AG04450 (cell line): ENCODE measurements at regions of chr4 and their contacts with region 1.

Region 1: DNA sequence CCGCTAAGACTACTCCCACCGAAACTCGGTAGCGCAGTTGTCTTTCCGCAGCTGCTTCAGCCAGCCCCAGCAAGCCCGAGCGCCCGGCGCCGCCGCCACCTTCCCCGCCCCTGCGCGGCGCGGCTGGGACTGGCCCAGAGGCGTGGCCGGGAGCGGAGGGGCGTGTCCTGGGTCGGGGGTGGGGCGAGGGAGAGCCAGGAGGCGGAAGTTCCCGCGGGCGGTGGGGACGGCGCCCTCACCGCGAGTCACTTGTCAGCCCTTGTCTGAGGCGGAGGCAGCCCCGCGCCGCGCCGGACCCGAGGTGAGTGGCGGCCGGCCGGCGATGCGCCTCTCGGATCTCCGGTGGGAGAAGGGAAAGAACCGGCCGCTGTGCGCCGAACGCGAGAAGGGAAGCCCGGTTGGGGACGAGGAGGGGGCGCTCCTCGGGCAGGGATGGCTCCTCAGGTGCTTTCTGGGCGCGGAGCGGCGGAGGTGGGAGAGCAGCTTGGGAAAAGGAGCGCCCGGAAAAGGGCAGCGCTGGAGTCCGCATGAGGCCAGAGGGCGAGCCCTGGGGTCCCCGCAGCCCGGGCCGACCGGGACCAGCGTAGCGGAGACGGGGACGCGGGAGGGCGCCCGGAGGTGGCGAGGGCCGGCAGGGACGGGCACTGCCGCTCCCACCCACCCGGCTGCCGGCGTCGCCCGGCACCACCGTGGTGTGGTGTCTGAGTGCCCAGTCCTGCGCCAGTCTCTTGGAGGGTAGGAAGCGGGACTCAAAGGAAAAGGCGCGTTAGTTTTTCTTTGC is at the start of gene PDLIM5:
- DNase-seq: peak; percentile 43
- H3K4me3 ChIP-seq: peak within 1 kb of the TSS; percentile 87
- H3K27ac ChIP-seq: peak within 1 kb of the TSS; percentile 74
- H3K27me3 ChIP-seq: no peaks in the 10 kb centered on the region
- CTCF ChIP-seq: no peak
- polyA plus RNA-seq, gene PDLIM5: 79.6 and 81.5 TPM in 2 replicates

Region 2: DNA sequence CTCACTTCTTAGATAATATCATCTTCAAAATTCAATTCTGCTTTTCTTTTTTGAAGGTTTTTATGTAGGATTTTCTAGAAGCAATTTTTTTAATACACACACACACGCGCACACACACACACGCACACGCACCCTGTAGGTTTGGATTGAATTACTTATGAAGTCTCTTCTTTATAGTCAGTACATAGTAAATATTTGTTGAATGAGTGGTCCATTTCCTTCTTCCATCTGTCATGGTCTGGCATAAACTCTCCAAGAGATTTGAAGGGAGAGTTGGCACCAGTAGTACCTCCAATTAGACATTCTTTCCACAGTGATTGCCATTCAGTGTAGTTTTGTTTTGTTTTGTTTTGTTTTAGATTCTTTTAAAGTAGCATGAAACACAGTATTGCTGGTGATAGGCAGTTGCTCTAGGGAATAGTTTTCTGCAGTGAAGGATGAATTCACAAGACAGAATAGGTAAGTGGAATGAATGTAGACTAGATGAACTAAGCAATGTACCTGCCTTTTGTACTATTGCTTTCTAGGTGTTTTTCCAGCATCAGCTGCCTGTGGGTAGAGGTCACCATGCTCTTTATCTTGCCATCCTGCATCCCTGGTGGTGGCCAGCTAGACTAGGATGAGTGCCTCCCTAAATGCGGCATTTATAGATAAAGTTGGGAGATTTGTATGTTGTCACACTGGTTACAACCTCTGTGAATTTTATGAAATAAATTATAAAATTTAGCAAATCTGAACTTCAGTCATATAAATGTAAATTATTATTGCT is 20.4 kb after region 1 on chr4:
- CTCF ChIA-PET with region 1: no interaction called
- POLR2A ChIA-PET with region 1: no interaction called
- DNase-seq: no peak
- H3K4me3 ChIP-seq: no peak overlapping the region
- H3K27ac ChIP-seq: no peak overlapping the region
- H3K27me3 ChIP-seq: no peaks in the 10 kb centered on the region
- CTCF ChIP-seq: no peak

Region 3: DNA sequence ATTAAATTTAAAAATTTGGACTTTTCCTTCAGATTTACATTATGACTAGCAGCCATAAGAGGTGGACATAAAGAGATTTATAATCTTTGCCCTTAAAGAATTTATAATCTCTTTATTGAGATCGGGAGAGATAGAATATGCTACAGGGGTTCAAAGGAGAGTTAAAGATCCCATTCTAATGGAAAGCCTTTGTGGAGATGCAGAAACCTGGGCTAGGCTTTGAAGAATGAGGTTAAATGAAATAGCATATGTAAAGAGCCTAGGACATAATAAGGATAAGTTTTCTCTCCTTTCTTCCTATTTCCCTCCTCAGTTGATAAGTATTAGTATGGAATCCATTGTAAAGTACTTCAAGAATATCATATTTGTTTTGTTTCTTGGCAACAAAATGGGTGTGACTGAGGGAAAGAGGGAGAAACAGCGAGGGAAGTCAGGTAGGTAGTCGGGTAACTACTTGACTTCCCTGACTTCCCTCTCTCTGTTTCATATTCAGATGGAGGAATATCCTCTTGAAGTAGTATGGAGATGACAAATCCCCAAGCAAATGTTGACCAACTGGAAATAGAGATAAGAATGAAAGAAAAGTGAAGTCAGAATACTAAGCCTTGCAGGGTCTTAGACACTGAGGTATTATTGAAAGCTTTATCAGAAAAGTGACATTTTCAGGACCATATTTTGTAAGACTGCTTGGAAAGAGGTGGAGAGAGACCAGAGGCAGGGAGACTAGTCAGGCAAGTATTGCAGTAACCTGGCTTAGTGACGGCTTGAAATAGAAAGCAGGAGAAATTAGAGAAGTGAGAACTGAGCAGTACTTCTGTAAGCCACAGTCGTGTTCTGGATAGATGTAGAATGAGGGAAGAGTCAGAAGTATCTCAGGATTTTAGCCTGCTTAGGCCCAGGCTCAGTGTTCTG is 82.8 kb after region 1 on chr4:
- CTCF ChIA-PET with region 1: no interaction called
- POLR2A ChIA-PET with region 1: no interaction called
- DNase-seq: no peak
- H3K4me3 ChIP-seq: no peak overlapping the region
- H3K27ac ChIP-seq: no peak overlapping the region
- H3K27me3 ChIP-seq: no peaks in the 10 kb centered on the region
- CTCF ChIP-seq: no peak

Region 4: GRCh38 chr4:94588896-94589693 is 137.2 kb after region 1 on chr4:
- CTCF ChIA-PET with region 1: interaction called, 10 read pairs
- POLR2A ChIA-PET with region 1: no interaction called
- DNase-seq: no peak
- H3K4me3 ChIP-seq: no peak overlapping the region
- H3K27ac ChIP-seq: no peak overlapping the region
- H3K27me3 ChIP-seq: no peaks in the 10 kb centered on the region
- CTCF ChIP-seq: no peak

Region 5: DNA sequence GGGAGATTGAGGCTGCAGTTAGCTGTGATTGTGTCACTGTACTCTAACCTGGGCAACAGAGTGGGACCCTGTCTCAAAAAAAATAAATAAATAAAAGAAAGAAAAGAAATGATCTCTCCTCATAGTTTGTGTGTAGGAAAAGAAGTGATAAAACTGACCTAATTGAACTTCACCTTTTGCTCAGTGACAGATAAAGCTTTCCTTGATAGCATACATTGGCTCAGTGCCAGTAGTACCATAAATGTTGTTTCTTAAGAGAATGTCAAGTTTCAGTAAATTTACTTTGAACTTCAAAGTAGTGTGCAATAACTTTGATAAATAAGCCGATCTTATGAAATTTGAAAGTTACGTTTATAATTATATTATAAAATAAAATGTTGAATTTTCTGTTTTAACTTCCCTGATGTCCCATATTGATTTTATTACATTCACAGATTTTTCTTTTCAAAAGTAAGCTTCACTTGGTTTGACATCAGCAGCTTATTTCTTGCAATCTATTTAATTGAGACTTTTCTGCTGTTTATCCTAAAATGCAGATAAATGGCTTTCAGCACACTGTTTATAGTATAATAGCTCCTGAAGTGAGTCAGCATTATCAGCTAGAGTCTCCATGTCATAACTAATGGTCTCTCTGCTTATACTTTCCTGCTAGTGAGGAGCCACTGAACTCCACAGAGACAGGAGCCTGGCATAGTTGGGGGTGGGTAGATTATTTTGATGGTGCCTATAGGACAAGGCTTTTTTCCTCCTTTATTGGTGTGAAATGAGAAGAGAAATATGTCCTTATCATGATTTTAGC is 636.0 kb after region 1 on chr4:
- CTCF ChIA-PET with region 1: interaction called, 10 read pairs
- POLR2A ChIA-PET with region 1: no interaction called
- DNase-seq: no peak
- H3K4me3 ChIP-seq: no peak overlapping the region
- H3K27ac ChIP-seq: no peak overlapping the region
- H3K27me3 ChIP-seq: no peaks in the 10 kb centered on the region
- CTCF ChIP-seq: no peak